ENCODE measurements at regions of chr7 and their contacts with region 1.

Region 1: DNA sequence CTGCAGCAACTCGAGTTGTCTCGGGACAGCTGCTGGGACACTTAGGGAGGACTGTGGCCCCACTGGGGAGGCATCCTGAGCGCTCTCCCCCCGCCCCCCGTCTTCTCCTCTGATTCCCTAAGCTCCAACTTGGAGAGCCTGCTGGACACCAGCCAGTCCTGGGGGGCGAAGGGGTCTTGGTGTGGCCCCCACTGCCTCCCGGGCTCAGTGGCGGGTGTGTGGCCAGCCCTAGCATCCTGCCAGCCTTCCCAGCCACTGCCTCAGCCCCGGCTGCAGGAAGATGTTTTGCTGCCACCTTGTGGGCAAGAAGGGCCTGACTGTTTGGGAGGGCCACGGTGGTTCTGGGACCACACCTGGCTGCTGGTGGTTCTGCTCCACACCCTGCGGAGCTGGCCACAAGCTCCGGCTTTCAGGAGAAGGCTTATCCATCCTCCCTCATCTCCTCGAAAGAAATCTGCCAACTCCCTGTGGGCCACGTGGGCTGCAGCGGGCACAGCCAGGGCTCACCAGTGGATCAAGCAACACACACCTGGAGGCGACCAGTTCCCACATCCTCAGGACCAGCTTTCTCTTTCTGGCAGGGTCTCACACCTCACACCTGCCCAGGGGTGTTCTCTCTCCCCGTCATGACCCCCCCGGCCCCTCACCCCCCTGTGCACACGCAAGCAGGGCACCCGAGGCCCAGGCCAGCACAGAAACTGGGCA is 24.8 kb downstream of the AGAP3 start:
- DNase-seq: peak; percentile 54 to 66
- ATAC-seq: peak; percentile 87 to 89
- H3K4me3 ChIP-seq: no peak overlapping the region
- H3K27ac ChIP-seq: no peak overlapping the region
- H3K4me1 ChIP-seq: peaks cover 4 to 5% of the 10 kb centered on the region in 2 donors
- H3K27me3 ChIP-seq: no peaks in the 10 kb centered on the region
- CTCF ChIP-seq: peak; percentile 82 to 96 (median 89)
- POLR2A ChIP-seq: no peak

Region 2: GRCh38 chr7:150898475-150899011 is 212.6 kb before region 1 on chr7:
- in situ Hi-C with region 1: no loop called
- intact Hi-C with region 1: loop called (anchors 1 kb)
- DNase-seq: peak; percentile 44 to 45
- ATAC-seq: peak; percentile 58 to 84
- H3K4me3 ChIP-seq: no peak overlapping the region
- H3K27ac ChIP-seq: no peak overlapping the region
- H3K4me1 ChIP-seq: peaks cover 0 to 5% of the 10 kb centered on the region in 2 donors
- H3K27me3 ChIP-seq: peaks cover 0 to 13% (median 6%) of the 10 kb centered on the region in 3 donors
- CTCF ChIP-seq: peak; percentile 78 to 94 (median 85)
- POLR2A ChIP-seq: no peak

Region 3: GRCh38 chr7:150962553-150963399 is 148.3 kb before region 1 on chr7:
- in situ Hi-C with region 1: no loop called
- intact Hi-C with region 1: loop called (anchors 2 kb)
- DNase-seq: no peak
- ATAC-seq: no peak
- H3K4me3 ChIP-seq: no peak overlapping the region
- H3K27ac ChIP-seq: no peak overlapping the region
- H3K4me1 ChIP-seq: peaks cover 1 to 6% of the 10 kb centered on the region in 2 donors
- H3K27me3 ChIP-seq: no peaks in the 10 kb centered on the region
- CTCF ChIP-seq: peak; percentile 10 to 76 (median 61)
- POLR2A ChIP-seq: no peak

Region 4: GRCh38 chr7:150974468-150975391 is 136.4 kb before region 1 on chr7:
- in situ Hi-C with region 1: no loop called
- intact Hi-C with region 1: no loop called
- DNase-seq: no peak
- ATAC-seq: no peak
- H3K4me3 ChIP-seq: peak overlapping the region; percentile 24 to 40 (median 29)
- H3K27ac ChIP-seq: no peak overlapping the region
- H3K4me1 ChIP-seq: peaks cover 6 to 26% of the 10 kb centered on the region in 2 donors
- H3K27me3 ChIP-seq: peaks cover 49 to 71% (median 56%) of the 10 kb centered on the region in 3 donors
- CTCF ChIP-seq: peak in 1 of 5 experiments; percentile 16
- POLR2A ChIP-seq: no peak

Region 5: GRCh38 chr7:151057989-151058780 is 52.9 kb before region 1 on chr7:
- in situ Hi-C with region 1: no loop called
- intact Hi-C with region 1: loop called (anchors 2 kb)
- DNase-seq: peak; percentile 100
- ATAC-seq: peak; percentile 85 to 87
- H3K4me3 ChIP-seq: peak overlapping the region; percentile 71 to 92 (median 86)
- H3K27ac ChIP-seq: peak overlapping the region; percentile 93 to 99 (median 98)
- H3K4me1 ChIP-seq: peaks cover 22 to 44% of the 10 kb centered on the region in 2 donors
- H3K27me3 ChIP-seq: no peaks in the 10 kb centered on the region
- CTCF ChIP-seq: no peak
- POLR2A ChIP-seq: peak; percentile 84 to 99

Region 6: DNA sequence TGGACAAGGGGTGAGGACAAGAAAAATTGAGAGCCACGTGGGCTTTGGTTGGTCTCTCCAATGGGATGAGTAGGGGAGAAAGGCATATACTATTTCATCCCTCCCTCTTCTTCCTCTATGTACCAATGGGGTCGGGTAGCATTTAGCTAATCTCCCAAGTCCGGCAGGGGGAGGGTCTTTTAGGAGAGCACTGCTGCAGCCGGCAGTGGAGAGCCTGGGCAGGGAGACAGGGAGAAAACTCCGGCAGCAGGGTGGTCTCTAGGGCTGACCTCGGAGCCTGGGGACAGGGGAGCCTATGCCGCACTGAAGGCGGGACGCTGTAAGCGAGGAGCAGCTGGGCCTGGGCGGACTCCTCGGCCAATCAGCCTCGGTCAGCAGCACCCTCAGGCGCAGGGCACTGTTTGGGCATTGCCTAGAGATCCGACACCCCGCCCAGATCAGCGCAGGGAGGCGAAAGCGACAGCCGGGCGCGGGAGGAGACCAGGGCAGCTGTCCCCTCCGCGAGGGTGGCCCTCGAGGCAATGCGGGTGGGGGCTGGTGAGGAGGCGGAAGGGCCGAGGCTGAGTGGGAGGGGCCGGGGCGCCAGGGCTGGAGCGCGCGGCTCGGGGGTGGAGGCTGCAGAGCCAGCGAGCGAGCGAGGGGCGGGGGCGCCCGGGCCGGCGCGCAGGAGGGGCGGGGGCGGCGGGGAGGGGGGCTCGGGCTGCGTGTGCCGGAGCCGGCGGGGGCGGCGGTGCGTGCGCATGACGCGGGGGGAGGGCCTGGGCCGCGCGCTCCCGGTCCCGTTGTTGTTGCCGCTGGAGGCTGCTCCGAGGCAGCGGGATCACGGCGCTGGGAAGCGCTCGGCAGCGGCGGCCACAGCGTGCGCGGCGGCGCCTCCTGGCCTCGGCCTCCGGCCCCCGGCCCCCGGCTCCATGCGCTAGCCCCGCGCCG is 25.1 kb before region 1 on chr7 and contains the start of gene AGAP3:
- in situ Hi-C with region 1: no loop called
- intact Hi-C with region 1: loop called (anchors 1 kb)
- DNase-seq: peak; percentile 83 to 86
- ATAC-seq: peak; percentile 44 to 55
- H3K4me3 ChIP-seq: peak within 1 kb of the TSS; percentile 72 to 95 (median 84)
- H3K27ac ChIP-seq: peak within 1 kb of the TSS; percentile 86 to 96 (median 92)
- H3K4me1 ChIP-seq: peaks cover 44 to 56% of the 10 kb centered on the region in 2 donors
- H3K27me3 ChIP-seq: no peaks in the 10 kb centered on the region
- CTCF ChIP-seq: no peak
- POLR2A ChIP-seq: peak; percentile 79 to 85
- total RNA-seq, gene AGAP3: 31.1 to 65.3 (median 36.3) TPM

Region 7: DNA sequence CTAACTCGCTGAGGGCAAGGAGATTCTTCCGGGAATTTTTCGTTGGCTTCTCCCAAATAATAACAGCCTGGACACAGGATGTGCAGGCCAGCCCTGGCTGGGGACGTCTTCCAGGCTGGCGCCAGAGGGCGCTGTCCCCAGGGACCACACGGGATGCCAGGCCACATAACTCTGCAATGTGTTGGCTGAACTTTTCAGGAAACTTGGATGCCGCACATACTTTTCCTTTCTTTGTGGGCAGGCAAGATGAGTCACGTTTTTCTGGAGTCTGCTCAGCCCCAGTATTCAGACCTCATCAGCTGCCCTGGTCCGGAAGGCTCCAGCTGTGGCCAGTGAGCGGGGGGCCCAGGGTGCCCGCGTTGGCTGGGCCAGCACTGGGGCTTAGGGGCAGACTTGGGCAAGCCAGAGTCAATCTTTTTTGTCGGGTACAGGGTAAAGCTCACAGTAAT is 643.1 kb after region 1 on chr7:
- in situ Hi-C with region 1: no loop called
- intact Hi-C with region 1: no loop called
- DNase-seq: peak; percentile 76 to 86
- ATAC-seq: peak; percentile 97 to 99
- H3K4me3 ChIP-seq: no peak overlapping the region
- H3K27ac ChIP-seq: peak overlapping the region; percentile 41 to 60 (median 50)
- H3K4me1 ChIP-seq: peaks cover 17 to 20% of the 10 kb centered on the region in 2 donors
- H3K27me3 ChIP-seq: no peaks in the 10 kb centered on the region
- CTCF ChIP-seq: peak; percentile 84 to 92 (median 90)
- POLR2A ChIP-seq: no peak